Esophagus muscularis mucosa (tissue), 4 donors: ENCODE measurements at regions of chr20 and their contacts with region 1.

Region 1: GRCh38 chr20:21505161-21505809 is 8.6 kb downstream of the NKX2-2 start:
- DNase-seq: no peak
- H3K4me3 ChIP-seq: peak overlapping the region; percentile 40 to 58 (median 44)
- H3K27ac ChIP-seq: no peak overlapping the region
- H3K4me1 ChIP-seq: peaks cover 22 to 35% (median 30%) of the 10 kb centered on the region in 4 donors
- H3K27me3 ChIP-seq: peaks cover 0 to 97% (median 49%) of the 10 kb centered on the region in 4 donors
- CTCF ChIP-seq: peak; percentile 90 to 94 (median 90)
- EP300 ChIP-seq: no peak
- POLR2A ChIP-seq: no peak

Region 2: GRCh38 chr20:20837574-20838021 is 667.7 kb before region 1 on chr20:
- intact Hi-C with region 1: loop called (anchors 5 kb)
- DNase-seq: no peak
- H3K4me3 ChIP-seq: peak overlapping the region in 3 of 4 donors; percentile 13 to 24 (median 18)
- H3K27ac ChIP-seq: no peak overlapping the region
- H3K4me1 ChIP-seq: peaks cover 0 to 7% (median 4%) of the 10 kb centered on the region in 4 donors
- H3K27me3 ChIP-seq: peaks cover 0 to 44% (median 1%) of the 10 kb centered on the region in 4 donors
- CTCF ChIP-seq: peak; percentile 58 to 68 (median 67)
- EP300 ChIP-seq: no peak
- POLR2A ChIP-seq: no peak

Region 3: GRCh38 chr20:20860078-20860806 is 645.0 kb before region 1 on chr20:
- intact Hi-C with region 1: loop called (anchors 2 kb)
- DNase-seq: peak; percentile 91
- H3K4me3 ChIP-seq: no peak overlapping the region
- H3K27ac ChIP-seq: no peak overlapping the region
- H3K4me1 ChIP-seq: no peaks in the 10 kb centered on the region
- H3K27me3 ChIP-seq: peaks cover 0 to 5% (median 0%) of the 10 kb centered on the region in 4 donors
- CTCF ChIP-seq: peak; percentile 69 to 90 (median 79)
- EP300 ChIP-seq: no peak
- POLR2A ChIP-seq: no peak

Region 4: DNA sequence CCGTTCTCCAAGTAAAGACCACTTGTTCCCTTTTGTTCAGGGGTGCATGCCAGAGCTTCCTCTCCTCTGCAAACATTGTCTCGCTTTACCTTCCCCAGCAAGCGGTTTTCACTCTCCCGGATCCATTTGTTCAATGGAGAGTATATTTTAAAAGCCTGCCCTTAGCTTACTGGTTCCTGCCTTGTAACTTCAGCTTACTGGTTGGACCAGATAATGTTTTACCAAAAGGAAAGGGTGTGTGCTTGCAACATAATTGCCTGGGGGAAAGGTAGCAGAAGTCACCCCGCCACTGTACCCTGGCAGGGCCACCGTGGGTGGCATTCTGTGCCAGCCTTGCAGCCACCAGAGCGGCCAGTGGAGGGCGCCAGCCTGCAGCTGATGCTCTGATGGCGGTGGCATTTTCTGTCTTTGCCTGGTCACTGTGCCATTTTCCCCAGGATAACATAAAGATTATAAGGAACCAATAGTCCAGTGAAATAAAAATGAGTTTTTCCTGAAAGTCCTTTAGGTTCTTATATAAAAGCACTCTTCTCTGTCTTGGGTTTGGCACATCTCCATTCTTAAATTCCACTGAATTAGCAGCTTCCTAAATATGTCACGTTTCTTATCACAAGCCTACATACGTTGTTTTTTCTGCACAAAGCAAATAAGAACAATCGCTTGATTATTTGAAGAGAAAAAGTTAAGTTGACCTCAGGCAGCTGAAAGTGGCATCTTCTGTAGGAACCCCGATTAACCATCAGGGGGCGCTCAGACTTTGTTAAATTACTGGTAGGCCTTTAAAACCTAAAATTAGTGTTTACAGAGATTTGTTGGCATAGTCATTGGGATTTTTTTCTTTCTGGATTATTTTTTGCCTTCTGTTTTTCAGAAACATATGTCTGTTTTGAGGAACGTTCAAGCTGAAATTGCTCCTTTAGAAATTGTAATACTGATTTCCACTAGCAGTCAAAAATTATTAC is 269.5 kb before region 1 on chr20:
- intact Hi-C with region 1: loop called (anchors 2 kb)
- DNase-seq: no peak
- H3K4me3 ChIP-seq: no peak overlapping the region
- H3K27ac ChIP-seq: no peak overlapping the region
- H3K4me1 ChIP-seq: peaks cover 0 to 11% (median 6%) of the 10 kb centered on the region in 4 donors
- H3K27me3 ChIP-seq: no peaks in the 10 kb centered on the region
- CTCF ChIP-seq: peak; percentile 58 to 69 (median 68)
- EP300 ChIP-seq: no peak
- POLR2A ChIP-seq: no peak